BJ (cell line): ENCODE measurements at regions of chr1 and their contacts with region 1.

Region 1: GRCh38 chr1:109643385-109644230 is 12.3 kb upstream of the GSTM4 start:
- DNase-seq: no peak
- H3K4me3 ChIP-seq: no peak overlapping the region
- H3K27me3 ChIP-seq: no peaks in the 10 kb centered on the region
- CTCF ChIP-seq: peak; percentile 85

Region 2: DNA sequence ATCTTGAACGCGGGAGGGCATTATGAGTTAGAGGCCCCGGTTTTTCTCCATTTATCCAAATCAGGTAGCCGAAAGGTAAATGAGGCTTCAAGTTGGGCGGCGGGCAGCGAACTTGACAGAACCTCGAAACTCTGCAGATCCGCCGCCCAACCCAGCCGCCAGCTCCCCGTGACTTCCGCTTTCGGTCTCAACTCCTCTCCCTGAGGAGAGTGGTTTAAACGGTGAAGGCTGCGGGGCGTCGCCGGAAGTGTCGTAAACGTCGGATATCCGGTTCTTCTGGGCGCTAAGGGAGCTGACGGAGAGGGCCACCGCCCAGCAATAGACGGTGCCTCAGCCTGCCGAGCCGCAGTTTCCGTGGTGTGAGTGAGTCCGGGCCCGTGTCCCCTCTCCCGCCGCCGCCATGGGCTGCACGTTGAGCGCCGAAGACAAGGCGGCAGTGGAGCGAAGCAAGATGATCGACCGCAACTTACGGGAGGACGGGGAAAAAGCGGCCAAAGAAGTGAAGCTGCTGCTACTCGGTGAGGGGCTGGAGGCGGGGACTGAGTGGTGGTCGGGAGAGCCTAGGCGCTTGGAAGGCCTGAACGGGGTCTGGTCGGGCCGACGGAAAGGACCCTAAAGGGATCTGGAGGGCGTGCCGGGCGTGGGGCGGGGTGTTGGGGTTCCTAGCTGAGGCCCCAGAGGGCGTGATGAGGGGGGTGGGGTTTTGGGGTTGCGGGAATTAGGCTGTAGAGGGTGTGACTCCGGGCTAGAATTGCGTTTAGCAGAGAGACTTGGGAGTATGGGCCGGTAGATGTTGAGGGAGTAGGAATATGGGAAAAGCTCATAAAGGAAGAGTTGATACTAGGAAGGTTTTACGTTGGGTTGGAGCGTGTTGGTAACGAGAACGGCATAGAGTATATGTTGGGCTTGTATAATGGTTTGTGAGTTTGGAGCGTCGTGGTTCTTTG is 95.0 kb before region 1 on chr1 and contains the start of gene GNAI3:
- CTCF ChIA-PET with region 1: interaction called, 114 read pairs
- POLR2A ChIA-PET with region 1: interaction called, 5 read pairs
- DNase-seq: peak; percentile 70
- H3K4me3 ChIP-seq: peak within 1 kb of the TSS; percentile 98
- H3K27me3 ChIP-seq: no peaks in the 10 kb centered on the region
- CTCF ChIP-seq: no peak
- polyA plus RNA-seq, gene GNAI3: 4.7 and 9.6 TPM in 2 replicates

Region 3: GRCh38 chr1:109620841-109621286 is 22.7 kb before region 1 on chr1:
- CTCF ChIA-PET with region 1: interaction called, 153 read pairs
- POLR2A ChIA-PET with region 1: no interaction called
- DNase-seq: peak; percentile 71
- H3K4me3 ChIP-seq: peak overlapping the region; percentile 83
- H3K27me3 ChIP-seq: no peaks in the 10 kb centered on the region
- CTCF ChIP-seq: no peak

Region 4: GRCh38 chr1:109712321-109712864 is 68.8 kb after region 1 on chr1:
- CTCF ChIA-PET with region 1: no interaction called
- POLR2A ChIA-PET with region 1: no interaction called
- DNase-seq: no peak
- H3K4me3 ChIP-seq: peak overlapping the region; percentile 9; the same call in 1 of the 2 replicates
- H3K27me3 ChIP-seq: no peaks in the 10 kb centered on the region; the same call in 1 of the 2 replicates
- CTCF ChIP-seq: no peak

Region 5: DNA sequence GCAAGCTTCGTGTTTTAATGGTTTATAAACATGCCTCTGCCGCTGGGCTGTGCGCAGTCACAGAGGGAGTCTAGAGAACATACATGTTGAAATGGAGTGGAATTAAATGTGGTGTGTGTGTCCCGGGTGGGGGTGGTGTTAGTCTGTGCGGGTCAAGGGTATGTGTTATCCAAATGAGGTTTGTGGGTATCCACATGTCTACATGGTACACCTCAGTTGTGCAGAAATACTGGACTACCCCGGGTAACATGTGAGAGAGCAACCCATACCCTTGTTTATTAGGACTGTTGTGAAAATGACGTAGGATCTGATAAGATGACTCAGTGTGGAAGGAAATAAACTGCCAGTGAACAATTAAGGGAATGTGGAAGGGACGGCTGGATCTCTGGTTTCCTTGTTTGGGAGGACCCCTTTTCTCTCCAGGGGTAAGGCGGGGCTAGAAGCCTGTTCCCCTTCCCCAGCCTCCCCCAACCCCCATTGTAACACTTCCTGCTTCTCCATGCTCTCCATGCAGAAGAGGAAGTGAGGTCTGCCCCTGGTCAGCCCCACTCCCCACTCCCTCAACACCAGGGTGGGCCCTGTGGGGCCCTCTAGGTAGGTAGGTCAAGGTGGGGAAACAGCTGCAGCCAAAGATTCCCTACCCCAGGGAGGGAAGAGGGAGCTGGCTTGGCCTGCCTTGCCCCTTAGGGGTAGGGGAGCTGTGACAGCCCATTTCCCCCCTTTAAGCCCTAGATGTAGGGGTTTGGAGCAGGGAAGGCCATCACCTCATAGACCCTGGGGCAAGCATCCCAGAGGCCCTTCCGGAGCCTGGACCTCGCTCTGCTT is 119.4 kb after region 1 on chr1:
- CTCF ChIA-PET with region 1: interaction called, 288 read pairs
- POLR2A ChIA-PET with region 1: no interaction called
- DNase-seq: no peak
- H3K4me3 ChIP-seq: no peak overlapping the region
- H3K27me3 ChIP-seq: no peaks in the 10 kb centered on the region
- CTCF ChIP-seq: no peak

Region 6: GRCh38 chr1:109821221-109821669 is 177.6 kb after region 1 on chr1:
- CTCF ChIA-PET with region 1: no interaction called
- POLR2A ChIA-PET with region 1: no interaction called
- DNase-seq: peak; percentile 76
- H3K4me3 ChIP-seq: no peak overlapping the region
- H3K27me3 ChIP-seq: no peaks in the 10 kb centered on the region
- CTCF ChIP-seq: no peak

Region 7: DNA sequence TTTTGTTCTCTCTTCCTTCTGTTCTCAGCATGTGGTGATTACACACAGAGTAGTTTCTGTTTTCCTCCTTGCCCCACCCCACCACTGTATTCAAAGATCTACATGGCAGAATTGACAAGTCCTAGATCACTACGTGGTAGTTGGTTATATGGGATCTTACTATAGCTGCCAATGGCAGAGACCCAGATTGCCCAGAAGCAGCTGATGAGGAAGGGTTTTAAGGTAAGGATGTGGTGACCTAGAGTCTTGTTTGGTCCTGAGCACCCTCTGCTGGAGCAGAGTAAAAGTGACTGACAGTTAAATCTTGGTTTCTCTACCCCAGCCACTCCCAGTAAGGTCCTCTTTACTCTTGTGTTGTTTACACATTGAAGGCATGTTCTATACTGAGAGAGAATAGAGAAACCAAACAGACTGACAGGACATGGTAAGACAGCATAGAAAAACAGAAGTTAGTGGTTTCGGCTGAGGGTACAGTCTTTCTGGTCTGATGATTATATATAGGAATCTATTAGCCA is 368.0 kb after region 1 on chr1:
- CTCF ChIA-PET with region 1: interaction called, 11 read pairs
- POLR2A ChIA-PET with region 1: no interaction called
- DNase-seq: no peak
- H3K4me3 ChIP-seq: no peak overlapping the region
- H3K27me3 ChIP-seq: no peaks in the 10 kb centered on the region
- CTCF ChIP-seq: peak; percentile 69